Activated T-helper 2 cell treated with anti-CD3 and anti-CD28 coated beads, Interferon-gamma antibody, Interleukin-2, Interleukin-4, amounts not matched to agents 10 μg/mL and 5 μg/mL and 100 μg/mL, durations not matched to agents 14 hours and 24 hours and 36 hours (primary cell): ENCODE measurements at regions of chr17 and their contacts with region 1.

Region 1: DNA sequence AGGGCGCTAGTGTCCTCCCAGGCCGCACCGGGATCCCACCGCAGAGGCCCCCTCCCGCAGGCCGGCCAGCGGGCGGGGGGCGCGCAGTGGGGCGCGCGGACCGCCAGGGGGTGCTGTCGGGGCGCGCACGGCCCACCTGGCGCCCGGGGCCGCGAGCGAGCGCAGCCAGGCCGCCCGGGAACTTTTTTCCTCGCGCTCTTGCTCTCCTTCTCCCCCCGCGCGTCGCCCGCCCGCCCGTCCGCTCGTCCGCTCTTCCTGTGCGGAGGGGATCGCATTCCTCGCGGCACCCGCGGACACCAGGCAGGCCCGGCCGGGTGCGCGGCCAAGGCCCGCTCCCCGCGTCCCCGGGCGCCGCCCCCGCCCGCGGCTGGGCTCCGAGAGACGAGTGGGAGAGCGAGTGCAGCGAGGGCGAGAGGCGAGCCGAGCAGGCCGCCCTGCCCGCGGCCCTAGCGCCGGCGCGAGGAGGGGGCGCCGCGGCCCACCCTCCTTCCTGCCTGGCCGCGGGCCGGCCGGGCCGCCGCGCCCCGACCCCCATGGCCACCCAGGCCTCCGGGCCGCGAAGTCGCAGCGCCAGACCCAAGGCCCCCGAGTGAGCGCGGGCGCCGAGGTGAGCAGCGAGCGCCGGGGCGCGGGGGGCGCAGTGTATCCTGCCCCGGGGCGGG is at the start of gene RAI1:
- DNase-seq: peak; percentile 68
- H3K4me3 Mint-ChIP-seq: peak within 1 kb of the TSS; percentile 85
- H3K27ac Mint-ChIP-seq: peak within 1 kb of the TSS; percentile 85
- H3K4me1 Mint-ChIP-seq: peaks cover 28% of the 10 kb centered on the region
- H3K27me3 Mint-ChIP-seq: peaks cover 11% of the 10 kb centered on the region
- total RNA-seq, gene RAI1: 33.5 and 36.5 TPM in 2 replicates

Region 2: GRCh38 chr17:17694169-17695081 is 13.1 kb after region 1 on chr17:
- intact Hi-C with region 1: loop called (anchors 1 kb)
- DNase-seq: peak; percentile 65
- H3K4me3 Mint-ChIP-seq: peak overlapping the region; percentile 80
- H3K27ac Mint-ChIP-seq: peak overlapping the region; percentile 98
- H3K4me1 Mint-ChIP-seq: peaks cover 57% of the 10 kb centered on the region
- H3K27me3 Mint-ChIP-seq: no peaks in the 10 kb centered on the region

Region 3: GRCh38 chr17:17752089-17752820 is 70.9 kb after region 1 on chr17:
- intact Hi-C with region 1: loop called (anchors 2 kb)
- DNase-seq: peak; percentile 96
- H3K4me3 Mint-ChIP-seq: peak overlapping the region; percentile 89
- H3K27ac Mint-ChIP-seq: peak overlapping the region; percentile 93
- H3K4me1 Mint-ChIP-seq: peaks cover 39% of the 10 kb centered on the region
- H3K27me3 Mint-ChIP-seq: no peaks in the 10 kb centered on the region

Region 4: GRCh38 chr17:17812211-17813057 is 131.1 kb after region 1 on chr17:
- intact Hi-C with region 1: loop called (anchors 5 kb)
- DNase-seq: peak; percentile 49
- H3K4me3 Mint-ChIP-seq: no peak overlapping the region
- H3K27ac Mint-ChIP-seq: no peak overlapping the region
- H3K4me1 Mint-ChIP-seq: peaks cover 9% of the 10 kb centered on the region
- H3K27me3 Mint-ChIP-seq: no peaks in the 10 kb centered on the region

Region 5: DNA sequence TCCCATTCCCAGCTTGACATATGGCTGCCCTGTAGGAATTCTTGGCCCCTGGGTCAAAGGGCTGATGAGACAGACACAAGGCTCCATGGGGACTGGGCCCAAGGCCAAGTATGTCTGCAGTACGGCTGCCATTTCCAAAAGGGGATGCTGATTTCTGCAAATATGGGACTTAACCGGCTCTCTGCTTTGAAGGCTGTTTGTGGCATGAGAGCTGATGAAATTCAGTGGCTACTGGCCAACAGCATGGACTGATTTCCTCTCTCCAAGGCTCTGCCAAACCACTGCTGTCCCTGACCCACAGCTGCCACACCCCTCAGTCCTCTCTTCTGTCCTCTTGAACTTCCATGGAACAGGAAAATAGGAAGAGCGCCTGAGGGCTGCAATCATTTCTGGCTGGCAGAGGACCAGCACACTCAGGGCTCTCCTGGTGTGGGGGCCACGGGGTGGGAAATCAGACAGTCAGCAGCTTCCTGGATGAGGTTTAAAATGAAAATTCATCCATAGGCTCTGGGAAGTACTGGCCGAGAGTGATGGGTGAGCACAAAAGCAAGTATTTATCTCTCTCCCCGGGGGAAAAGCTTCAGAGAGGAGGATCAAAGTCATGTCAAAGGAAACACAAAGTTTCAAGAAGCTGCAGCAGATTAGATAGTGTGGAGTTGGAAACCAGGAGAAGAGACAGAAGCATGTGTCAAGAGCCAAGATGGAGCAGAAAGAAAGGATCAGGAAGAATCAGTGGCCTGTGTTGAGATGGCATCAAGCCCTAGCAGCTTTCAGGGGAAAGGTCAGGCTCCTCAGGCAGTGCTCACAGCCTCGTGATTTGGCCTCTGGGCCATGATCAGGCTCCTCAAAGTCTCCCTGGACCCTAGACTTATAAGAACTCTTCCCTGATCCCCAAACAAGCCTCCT is 219.6 kb after region 1 on chr17:
- intact Hi-C with region 1: no loop called
- DNase-seq: no peak
- H3K4me3 Mint-ChIP-seq: no peak overlapping the region
- H3K27ac Mint-ChIP-seq: no peak overlapping the region
- H3K4me1 Mint-ChIP-seq: no peaks in the 10 kb centered on the region
- H3K27me3 Mint-ChIP-seq: no peaks in the 10 kb centered on the region

Region 6: GRCh38 chr17:17919169-17920107 is 238.1 kb after region 1 on chr17:
- intact Hi-C with region 1: loop called (anchors 5 kb)
- DNase-seq: peak; percentile 34
- H3K4me3 Mint-ChIP-seq: no peak overlapping the region
- H3K27ac Mint-ChIP-seq: no peak overlapping the region
- H3K4me1 Mint-ChIP-seq: peaks cover 5% of the 10 kb centered on the region
- H3K27me3 Mint-ChIP-seq: no peaks in the 10 kb centered on the region

Region 7: DNA sequence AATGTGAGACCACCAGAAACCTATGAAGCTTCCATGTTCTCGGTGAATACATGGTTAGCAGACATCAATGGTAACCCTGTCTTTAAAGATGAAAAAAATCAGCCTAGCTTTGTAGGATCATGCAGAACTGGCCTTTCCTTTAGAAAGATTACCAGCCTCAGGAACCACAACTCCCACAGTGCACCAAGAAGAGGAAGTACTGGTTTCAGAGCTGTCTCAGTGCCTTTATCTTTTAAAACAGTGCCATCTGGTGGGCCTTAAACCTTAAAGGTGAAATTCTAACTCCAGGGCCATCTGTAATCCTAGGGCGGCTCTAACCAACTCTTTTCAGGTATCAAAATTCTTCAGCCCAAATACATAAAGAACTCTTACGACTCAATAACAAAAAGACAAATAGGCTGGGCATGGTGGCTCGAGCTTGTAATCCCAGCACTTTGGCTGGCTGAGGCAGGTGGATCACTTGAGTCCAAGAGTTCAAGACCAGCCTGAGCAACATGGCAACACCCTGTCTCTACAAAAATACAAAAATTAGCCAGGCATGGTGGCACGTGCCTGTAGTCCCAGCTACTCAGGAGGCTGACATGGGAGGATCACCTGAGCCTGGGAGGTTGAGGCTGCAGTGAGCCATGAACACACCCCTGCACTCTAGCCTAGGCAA is 352.3 kb after region 1 on chr17:
- intact Hi-C with region 1: loop called (anchors 1 kb)
- DNase-seq: peak; percentile 35
- H3K4me3 Mint-ChIP-seq: no peak overlapping the region
- H3K27ac Mint-ChIP-seq: no peak overlapping the region
- H3K4me1 Mint-ChIP-seq: peaks cover 28% of the 10 kb centered on the region
- H3K27me3 Mint-ChIP-seq: no peaks in the 10 kb centered on the region